PC-9 (cell line): ENCODE measurements at regions of chr15 and their contacts with region 1.

Region 1: GRCh38 chr15:89358755-89359439 is 24.3 kb upstream of the POLG start:
- DNase-seq: peak; percentile 53 to 80
- H3K4me3 ChIP-seq: peak overlapping the region; percentile 62
- H3K27ac ChIP-seq: no peak overlapping the region
- H3K4me1 ChIP-seq: no peaks in the 10 kb centered on the region
- H3K27me3 ChIP-seq: peaks cover 69% of the 10 kb centered on the region
- CTCF ChIP-seq: peak; percentile 96

Region 2: GRCh38 chr15:89399238-89400120 is 40.6 kb after region 1 on chr15:
- CTCF ChIA-PET with region 1: interaction called, 12 read pairs
- POLR2A ChIA-PET with region 1: no interaction called
- intact Hi-C with region 1: loop called (anchors 1 kb)
- DNase-seq: peak in 1 of 2 experiments; percentile 42
- H3K4me3 ChIP-seq: peak overlapping the region; percentile 50; the same call in 1 of the 2 replicates
- H3K27ac ChIP-seq: no peak overlapping the region
- H3K4me1 ChIP-seq: peaks cover 15% of the 10 kb centered on the region; the same call in 1 of the 2 replicates
- H3K27me3 ChIP-seq: no peaks in the 10 kb centered on the region
- CTCF ChIP-seq: 0 out of 2 replicates have a peak, but pooled peaks have one; percentile 26

Region 3: DNA sequence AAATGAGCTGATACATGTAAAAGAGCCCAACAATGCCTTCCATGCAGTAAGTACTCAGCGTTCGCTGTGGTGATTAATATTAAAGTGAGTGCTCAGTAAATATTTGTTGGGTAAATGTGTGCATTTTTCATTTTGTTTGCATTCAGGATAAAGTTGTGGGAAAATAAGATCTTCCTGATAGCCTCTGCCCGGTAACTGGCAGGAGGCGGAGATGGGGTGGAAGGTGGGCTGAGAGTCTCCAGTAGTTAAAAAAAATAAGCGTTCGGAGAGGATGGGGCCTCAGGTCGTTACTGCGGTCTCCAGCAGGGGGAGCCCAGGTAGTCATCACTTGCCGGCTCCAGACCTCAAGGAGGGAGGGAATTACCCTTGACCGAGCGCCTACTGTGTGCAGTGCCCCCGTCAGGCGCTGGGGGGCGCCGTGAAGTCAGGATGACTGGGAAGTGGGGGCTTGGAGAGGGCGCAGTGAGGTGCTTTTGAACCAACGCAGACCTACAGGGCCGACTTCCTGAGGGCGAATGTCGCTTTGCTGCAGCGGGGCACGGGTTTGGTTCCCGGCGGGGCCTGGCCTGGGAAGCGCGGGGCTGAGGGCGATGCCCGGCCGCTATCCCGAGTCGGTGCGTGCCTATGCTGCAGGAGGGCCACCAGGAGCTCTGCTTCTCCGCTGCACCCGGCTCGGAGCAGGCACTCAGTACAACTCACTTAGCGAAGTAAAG is 57.4 kb after region 1 on chr15:
- CTCF ChIA-PET with region 1: interaction called, 4 read pairs
- POLR2A ChIA-PET with region 1: no interaction called
- intact Hi-C with region 1: loop called (anchors 1 kb)
- DNase-seq: peak; percentile 56 to 60
- H3K4me3 ChIP-seq: no peak overlapping the region
- H3K27ac ChIP-seq: no peak overlapping the region
- H3K4me1 ChIP-seq: no peaks in the 10 kb centered on the region
- H3K27me3 ChIP-seq: peaks cover 69% of the 10 kb centered on the region
- CTCF ChIP-seq: peak; percentile 94

Region 4: GRCh38 chr15:89442671-89443307 is 83.9 kb after region 1 on chr15:
- CTCF ChIA-PET with region 1: interaction called, 19 read pairs
- POLR2A ChIA-PET with region 1: no interaction called
- intact Hi-C with region 1: no loop called
- DNase-seq: peak in 1 of 2 experiments; percentile 56
- H3K4me3 ChIP-seq: no peak overlapping the region
- H3K27ac ChIP-seq: no peak overlapping the region
- H3K4me1 ChIP-seq: no peaks in the 10 kb centered on the region
- H3K27me3 ChIP-seq: peaks cover 28% of the 10 kb centered on the region
- CTCF ChIP-seq: peak; percentile 84

Region 5: GRCh38 chr15:89556413-89557262 is 197.7 kb after region 1 on chr15:
- CTCF ChIA-PET with region 1: interaction called, 3 read pairs
- POLR2A ChIA-PET with region 1: no interaction called
- intact Hi-C with region 1: loop called (anchors 5 kb)
- DNase-seq: peak; percentile 56 to 77
- H3K4me3 ChIP-seq: no peak overlapping the region
- H3K27ac ChIP-seq: no peak overlapping the region
- H3K4me1 ChIP-seq: peaks cover 4% of the 10 kb centered on the region
- H3K27me3 ChIP-seq: no peaks in the 10 kb centered on the region
- CTCF ChIP-seq: peak; percentile 85